Activated CD4-positive, alpha-beta T cell treated with anti-CD3 and anti-CD28 coated beads for 36 hours (primary cell): ENCODE measurements at regions of chr15 and their contacts with region 1.

Region 1: DNA sequence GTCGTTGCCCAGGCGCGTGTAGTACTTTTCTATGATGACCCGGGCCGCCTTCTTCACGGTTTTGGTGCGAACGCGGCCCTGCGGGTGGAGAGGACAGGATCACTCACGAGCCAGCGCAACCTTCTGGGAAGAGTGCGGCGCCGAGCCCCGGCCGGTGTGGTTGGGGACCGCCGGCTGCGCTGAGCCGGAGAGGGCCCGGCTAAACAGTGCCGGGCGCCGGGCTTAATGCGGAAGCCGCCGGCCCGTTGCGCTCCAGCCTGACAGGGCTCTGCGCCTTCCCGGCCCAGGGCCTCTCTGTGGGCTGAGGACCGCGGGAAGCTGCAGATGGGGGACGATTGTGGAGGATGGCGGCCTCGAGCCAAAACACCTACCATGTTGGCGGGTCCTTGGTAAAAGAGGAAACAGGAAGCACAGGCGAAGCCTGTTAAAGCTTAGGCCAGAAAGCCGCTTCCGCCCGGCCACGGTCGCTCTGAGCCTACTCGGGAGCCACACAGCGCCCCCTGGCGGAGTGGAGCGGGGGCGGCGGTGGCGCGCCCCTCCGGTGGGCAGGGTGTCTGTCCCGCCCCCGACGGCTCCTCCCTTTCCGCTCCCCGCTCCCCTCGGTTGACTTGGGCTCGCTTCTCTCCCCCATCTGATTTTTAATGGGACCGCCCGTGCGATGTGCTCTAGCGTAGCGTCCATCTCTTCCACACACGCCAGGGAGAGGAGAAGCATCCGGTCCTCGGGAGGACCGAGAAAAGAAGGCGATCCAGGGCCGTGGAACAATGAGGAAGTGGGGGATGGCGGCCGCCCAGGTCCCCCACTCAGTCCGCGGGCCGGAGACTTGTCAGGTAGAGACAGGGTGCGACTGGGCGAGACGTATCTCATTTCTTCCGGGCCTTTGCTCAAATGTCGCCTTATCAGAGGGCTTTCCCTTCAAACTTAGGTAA is at the start of gene RPS17:
- DNase-seq: peak; percentile 99
- ATAC-seq: peak; percentile 93
- H3K4me3 Mint-ChIP-seq: peak within 1 kb of the TSS; percentile 96
- H3K27ac Mint-ChIP-seq: peak within 1 kb of the TSS; percentile 96
- H3K4me1 Mint-ChIP-seq: peaks cover 23% of the 10 kb centered on the region
- H3K27me3 Mint-ChIP-seq: no peaks in the 10 kb centered on the region
- total RNA-seq, gene RPS17: 2,882 to 3,294 TPM

Region 2: GRCh38 chr15:82021992-82022391 is 518.3 kb before region 1 on chr15:
- CTCF ChIA-PET with region 1: no interaction called
- POLR2A ChIA-PET with region 1: no interaction called
- intact Hi-C with region 1: no loop called
- DNase-seq: no peak
- ATAC-seq: no peak
- H3K4me3 Mint-ChIP-seq: no peak overlapping the region
- H3K27ac Mint-ChIP-seq: no peak overlapping the region
- H3K4me1 Mint-ChIP-seq: no peaks in the 10 kb centered on the region
- H3K27me3 Mint-ChIP-seq: peaks cover 6% of the 10 kb centered on the region

Region 3: DNA sequence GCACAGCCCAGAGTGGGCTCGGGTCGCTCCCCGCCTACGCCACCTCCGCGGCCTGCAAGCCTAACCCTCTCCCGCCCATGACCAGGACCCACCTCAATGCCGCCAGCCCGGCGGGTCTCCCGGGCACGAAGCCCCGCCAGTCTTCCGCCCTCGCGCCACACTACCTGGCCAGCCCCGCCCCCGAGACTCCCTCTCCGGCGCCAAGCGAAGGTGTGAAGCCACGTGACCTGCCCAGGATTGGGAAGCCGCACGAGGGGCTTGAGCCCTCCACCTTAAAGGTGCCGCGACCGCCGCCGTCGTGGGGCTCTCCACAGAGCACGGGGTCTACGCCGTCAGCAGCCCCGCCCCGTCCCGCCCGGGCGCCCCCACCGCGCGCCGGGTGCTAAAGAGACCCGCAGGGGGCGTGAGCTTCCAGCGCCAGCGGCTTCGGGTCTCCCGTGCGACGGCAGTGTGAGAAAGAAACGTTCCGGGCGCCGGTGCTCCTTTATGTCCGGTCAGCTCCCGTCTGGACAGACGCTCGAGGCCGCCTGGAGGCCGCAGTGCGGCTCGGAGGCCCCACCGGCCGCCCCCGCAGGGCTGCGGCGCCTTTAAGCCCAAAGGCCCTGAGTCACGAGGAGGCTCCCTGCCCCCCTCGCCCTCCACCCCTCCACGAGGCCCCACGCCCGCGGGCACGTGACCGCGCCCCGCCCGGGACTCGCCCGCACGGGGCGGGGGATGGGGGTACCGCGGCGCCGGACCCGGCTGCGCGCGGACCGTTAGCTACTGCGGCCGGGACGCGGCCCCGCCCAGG is 106.9 kb after region 1 on chr15 and contains the start of gene CPEB1:
- CTCF ChIA-PET with region 1: interaction called, 3 read pairs
- POLR2A ChIA-PET with region 1: no interaction called
- intact Hi-C with region 1: loop called in 1 of 2 experiments (anchors 5 kb)
- DNase-seq: peak; percentile 60
- ATAC-seq: peak; percentile 66
- H3K4me3 Mint-ChIP-seq: no peak within 1 kb of the TSS
- H3K27ac Mint-ChIP-seq: no peak within 1 kb of the TSS
- H3K4me1 Mint-ChIP-seq: peaks cover 3% of the 10 kb centered on the region
- H3K27me3 Mint-ChIP-seq: peaks cover 42% of the 10 kb centered on the region
- total RNA-seq, gene CPEB1: 0.16 to 0.18 TPM

Region 4: DNA sequence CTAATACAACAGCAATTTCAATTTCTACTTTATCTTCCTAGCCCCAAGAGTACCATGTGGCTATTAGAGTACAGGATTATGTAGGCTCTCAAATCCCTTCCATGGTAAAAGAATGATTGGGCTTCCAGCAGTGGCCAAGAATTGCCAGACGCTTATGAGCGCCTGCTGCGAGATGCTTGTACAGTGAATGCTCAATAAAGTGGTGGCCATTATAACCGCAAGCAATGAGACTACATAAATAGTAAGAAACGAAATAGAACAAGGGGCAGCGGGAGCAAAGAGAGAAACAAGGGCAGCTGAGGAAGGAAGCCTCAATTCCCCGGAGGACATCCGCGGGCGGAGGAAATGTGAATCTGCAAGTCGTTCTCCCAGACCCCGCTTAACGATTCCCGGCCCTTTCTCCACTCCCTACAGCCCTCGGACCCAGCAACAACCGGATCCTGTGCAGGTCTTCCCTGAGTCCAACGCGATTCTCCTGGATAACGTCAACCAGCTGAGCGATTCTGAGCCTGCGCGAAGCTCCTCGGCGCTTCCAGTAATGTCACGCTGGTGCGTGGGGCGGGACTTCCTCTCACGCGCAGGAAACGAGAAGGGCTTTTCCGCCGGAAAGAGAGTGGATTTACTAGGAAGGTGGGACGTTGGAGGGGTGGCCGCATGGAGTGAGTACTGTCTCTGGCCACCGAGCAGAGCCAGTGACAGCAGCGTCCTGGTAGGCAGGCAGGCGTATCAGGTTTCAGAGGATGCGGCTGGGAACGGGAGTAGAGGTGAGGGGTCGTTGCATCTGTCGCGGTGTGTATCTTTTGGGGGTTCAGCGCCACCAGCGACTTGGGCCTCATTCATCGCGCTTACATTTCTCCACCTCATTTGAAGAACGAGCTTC is 209.9 kb after region 1 on chr15:
- CTCF ChIA-PET with region 1: interaction called, 6 read pairs
- POLR2A ChIA-PET with region 1: interaction called, 7 read pairs
- intact Hi-C with region 1: loop called (anchors 1 to 2 kb)
- DNase-seq: peak; percentile 91
- ATAC-seq: peak; percentile 95
- H3K4me3 Mint-ChIP-seq: peak overlapping the region; percentile 86
- H3K27ac Mint-ChIP-seq: peak overlapping the region; percentile 98
- H3K4me1 Mint-ChIP-seq: peaks cover 44% of the 10 kb centered on the region
- H3K27me3 Mint-ChIP-seq: no peaks in the 10 kb centered on the region

Region 5: GRCh38 chr15:82832601-82833361 is 292.5 kb after region 1 on chr15:
- CTCF ChIA-PET with region 1: no interaction called
- POLR2A ChIA-PET with region 1: interaction called, 4 read pairs
- intact Hi-C with region 1: loop called in 1 of 2 experiments (anchors 5 kb)
- DNase-seq: peak; percentile 72
- ATAC-seq: peak; percentile 92
- H3K4me3 Mint-ChIP-seq: no peak overlapping the region
- H3K27ac Mint-ChIP-seq: peak overlapping the region; percentile 7
- H3K4me1 Mint-ChIP-seq: peaks cover 34% of the 10 kb centered on the region
- H3K27me3 Mint-ChIP-seq: no peaks in the 10 kb centered on the region

Region 6: GRCh38 chr15:83207622-83208411 is 667.5 kb after region 1 on chr15 and contains the start of gene HDGFL3:
- CTCF ChIA-PET with region 1: no interaction called
- POLR2A ChIA-PET with region 1: no interaction called
- intact Hi-C with region 1: loop called in 1 of 2 experiments (anchors 5 kb)
- DNase-seq: peak; percentile 50
- ATAC-seq: peak; percentile 60
- H3K4me3 Mint-ChIP-seq: peak within 1 kb of the TSS; percentile 69
- H3K27ac Mint-ChIP-seq: no peak within 1 kb of the TSS
- H3K4me1 Mint-ChIP-seq: peaks cover 9% of the 10 kb centered on the region
- H3K27me3 Mint-ChIP-seq: peaks cover 25% of the 10 kb centered on the region
- total RNA-seq, gene HDGFL3: 5.0 to 7.4 TPM